ENCODE measurements at regions of chr7 and their contacts with region 1.

Region 1: DNA sequence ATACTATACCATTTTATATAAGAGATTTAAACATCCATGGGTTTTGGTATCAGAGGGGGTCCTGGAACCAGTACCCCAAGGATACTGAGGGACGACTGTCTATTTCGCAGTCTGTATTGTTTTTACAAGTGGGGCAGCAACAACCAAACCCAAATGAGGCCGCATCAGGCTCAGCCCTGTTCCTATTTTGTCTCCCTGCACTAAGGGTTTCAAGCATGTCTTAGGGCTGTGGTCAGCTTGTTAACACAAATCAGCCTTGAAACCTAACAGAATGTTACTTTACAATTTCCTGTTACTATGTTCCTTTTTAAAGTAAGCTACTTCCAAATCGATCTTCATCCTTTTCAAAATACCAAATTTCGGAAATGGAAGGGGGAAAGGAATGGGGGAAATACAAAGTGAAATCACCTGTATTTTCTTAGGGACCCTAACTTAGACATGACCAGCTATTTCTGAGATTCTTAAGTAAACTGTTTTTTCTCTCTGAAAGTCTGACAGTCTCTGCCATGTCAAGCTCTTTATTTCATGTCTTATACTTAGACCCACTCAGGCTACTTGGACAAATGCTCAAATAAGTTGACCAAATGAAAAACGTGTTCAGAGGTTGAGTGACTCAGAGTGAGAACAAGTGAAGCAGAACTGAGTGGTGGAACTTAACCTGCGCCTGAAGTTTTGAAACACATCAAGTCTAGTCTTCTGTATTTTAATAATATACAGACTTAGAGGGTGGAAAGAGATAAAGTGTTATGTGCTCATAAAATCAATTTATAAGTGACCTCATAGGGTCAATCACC is 75.8 kb downstream of the C1GALT1 start:
- DNase-seq: no peak
- H3K4me3 ChIP-seq: no peak overlapping the region
- H3K27ac ChIP-seq: no peak overlapping the region
- H3K4me1 ChIP-seq: no peaks in the 10 kb centered on the region
- H3K27me3 ChIP-seq: no peaks in the 10 kb centered on the region
- CTCF ChIP-seq: no peak

Region 2: DNA sequence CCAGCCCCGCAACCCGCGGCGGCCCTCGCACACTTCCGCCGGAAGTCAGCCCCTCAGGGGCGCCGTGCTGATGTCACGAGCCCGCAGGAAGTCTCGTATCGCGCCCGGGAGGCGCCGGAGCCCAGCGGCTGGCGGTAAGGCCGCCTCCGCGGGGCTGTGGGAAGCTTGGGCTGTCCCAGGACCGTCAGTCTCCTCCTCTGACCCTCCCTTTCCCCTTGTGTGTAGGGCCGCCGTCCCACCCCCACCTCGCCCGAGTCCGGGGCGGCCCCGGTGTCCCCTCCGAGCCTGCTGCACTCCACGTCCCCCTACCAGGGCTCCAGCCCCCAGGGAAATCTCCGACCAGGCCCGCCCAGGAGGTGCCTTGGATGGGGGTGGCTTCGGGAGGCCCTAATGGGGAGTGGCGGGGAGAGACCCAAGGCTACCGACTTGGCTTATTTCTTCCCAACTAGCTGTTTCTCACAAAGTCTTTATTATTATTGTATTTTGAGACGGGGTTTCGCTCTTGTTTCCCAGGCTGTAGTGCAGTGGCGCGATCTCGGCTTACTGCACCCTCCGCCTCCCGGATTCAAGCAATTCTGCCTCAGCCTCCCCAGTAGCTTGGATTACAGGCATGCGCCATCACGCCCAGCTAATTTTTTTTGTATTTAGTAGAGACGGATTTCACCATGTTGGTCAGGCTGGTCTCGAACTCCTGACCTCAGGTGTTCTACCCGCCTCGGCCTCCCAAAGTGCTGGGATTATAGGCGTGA is 680.6 kb before region 1 on chr7 and contains the start of gene ZDHHC4:
- CTCF ChIA-PET with region 1: no interaction called
- POLR2A ChIA-PET with region 1: no interaction called
- intact Hi-C with region 1: no loop called
- DNase-seq: peak; percentile 81 to 92
- H3K4me3 ChIP-seq: peak within 1 kb of the TSS; percentile 82
- H3K27ac ChIP-seq: peak within 1 kb of the TSS; percentile 72
- H3K4me1 ChIP-seq: peaks cover 17% of the 10 kb centered on the region
- H3K27me3 ChIP-seq: no peaks in the 10 kb centered on the region
- CTCF ChIP-seq: 0 out of 2 replicates have a peak, but pooled peaks have one; percentile 19
- total RNA-seq, gene ZDHHC4: 96.1 and 123 TPM in 2 replicates

Region 3: DNA sequence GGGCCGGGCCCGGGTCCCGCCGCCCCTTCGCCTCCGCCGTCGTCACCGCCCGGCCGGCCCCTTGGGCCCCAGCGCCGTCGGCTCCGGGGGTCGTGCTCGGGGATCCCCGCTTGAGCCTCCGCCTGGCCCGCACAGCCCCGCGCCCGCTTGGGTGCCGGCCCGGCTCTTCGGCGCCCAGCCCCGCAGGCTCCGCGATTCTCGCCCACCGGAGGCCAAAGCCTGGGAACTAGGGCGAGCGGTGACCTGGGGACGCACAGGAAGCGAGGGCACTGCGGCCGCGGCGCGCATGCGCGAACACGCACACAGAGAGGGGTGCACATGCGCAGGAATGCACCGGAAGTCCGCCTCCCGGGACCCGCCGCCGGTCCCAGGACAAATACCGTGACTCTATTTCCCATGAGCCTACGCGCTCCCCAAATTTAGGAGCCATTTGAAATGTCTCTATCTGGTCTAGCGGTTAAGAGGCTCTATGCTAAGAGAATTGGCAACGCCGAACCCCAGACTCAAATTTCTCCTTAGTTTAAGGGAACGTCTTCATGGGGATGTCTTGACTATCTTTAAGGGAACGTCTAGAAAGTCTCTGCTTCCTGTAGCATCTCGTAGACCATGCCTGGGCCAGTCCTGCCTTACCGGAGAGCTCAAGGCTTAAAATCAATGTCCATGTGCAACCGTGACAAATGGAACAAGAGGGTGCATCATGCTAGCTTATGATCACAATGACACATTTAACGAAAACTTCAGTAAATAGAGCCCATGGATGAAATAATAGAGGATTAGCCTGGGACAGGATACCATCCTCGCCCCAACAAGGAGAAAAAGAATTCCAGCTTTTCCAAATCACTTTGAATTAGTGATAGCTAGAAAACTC is 551.2 kb before region 1 on chr7 and contains the start of gene ZNF12:
- CTCF ChIA-PET with region 1: no interaction called
- POLR2A ChIA-PET with region 1: no interaction called
- intact Hi-C with region 1: no loop called
- DNase-seq: peak; percentile 86 to 97
- H3K4me3 ChIP-seq: peak within 1 kb of the TSS; percentile 71
- H3K27ac ChIP-seq: peak within 1 kb of the TSS; percentile 60
- H3K4me1 ChIP-seq: peaks cover 6% of the 10 kb centered on the region; the same call in 1 of the 2 replicates
- H3K27me3 ChIP-seq: no peaks in the 10 kb centered on the region
- CTCF ChIP-seq: no peak
- total RNA-seq, gene ZNF12: 25.2 and 37.5 TPM in 2 replicates

Region 4: GRCh38 chr7:7014827-7015610 is 243.1 kb before region 1 on chr7:
- CTCF ChIA-PET with region 1: no interaction called
- POLR2A ChIA-PET with region 1: no interaction called
- intact Hi-C with region 1: no loop called
- DNase-seq: peak in 1 of 2 experiments; percentile 79
- H3K4me3 ChIP-seq: no peak overlapping the region
- H3K27ac ChIP-seq: no peak overlapping the region
- H3K4me1 ChIP-seq: peaks cover 21% of the 10 kb centered on the region
- H3K27me3 ChIP-seq: 0 out of 2 replicates have a peak, but pooled peaks cover 5% of the 10 kb centered on the region
- CTCF ChIP-seq: no peak

Region 5: DNA sequence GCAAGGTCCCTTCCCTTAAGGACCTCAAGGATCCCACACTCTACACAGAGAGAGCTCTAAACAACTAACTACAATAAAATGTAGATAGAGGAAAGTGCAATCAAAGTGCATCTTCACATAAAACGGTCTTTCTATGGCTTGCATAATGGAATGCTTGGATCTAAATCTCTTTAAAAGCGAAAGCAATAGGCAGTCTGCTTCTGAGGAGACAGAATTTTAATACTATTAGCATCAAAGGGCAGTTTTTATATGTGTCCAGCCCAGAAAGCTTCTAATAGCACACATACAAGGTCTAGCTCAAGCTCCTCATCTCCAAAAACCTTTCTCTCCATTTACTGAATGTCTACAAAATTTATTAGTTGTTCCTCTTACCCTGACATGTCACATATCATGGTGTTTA is 177.3 kb before region 1 on chr7:
- CTCF ChIA-PET with region 1: no interaction called
- POLR2A ChIA-PET with region 1: no interaction called
- intact Hi-C with region 1: no loop called
- DNase-seq: no peak
- H3K4me3 ChIP-seq: no peak overlapping the region
- H3K27ac ChIP-seq: no peak overlapping the region
- H3K4me1 ChIP-seq: no peaks in the 10 kb centered on the region
- H3K27me3 ChIP-seq: no peaks in the 10 kb centered on the region; the same call in 1 of the 2 replicates
- CTCF ChIP-seq: no peak

Region 6: GRCh38 chr7:7221602-7222038 is 36.5 kb before region 1 on chr7:
- CTCF ChIA-PET with region 1: no interaction called
- POLR2A ChIA-PET with region 1: interaction called, 20 read pairs
- intact Hi-C with region 1: no loop called
- DNase-seq: peak; percentile 15 to 71
- H3K4me3 ChIP-seq: no peak overlapping the region
- H3K27ac ChIP-seq: peak overlapping the region; percentile 54
- H3K4me1 ChIP-seq: peaks cover 19% of the 10 kb centered on the region
- H3K27me3 ChIP-seq: no peaks in the 10 kb centered on the region
- CTCF ChIP-seq: no peak